ENCODE measurements at regions of chr7 and their contacts with region 1.

Region 1: DNA sequence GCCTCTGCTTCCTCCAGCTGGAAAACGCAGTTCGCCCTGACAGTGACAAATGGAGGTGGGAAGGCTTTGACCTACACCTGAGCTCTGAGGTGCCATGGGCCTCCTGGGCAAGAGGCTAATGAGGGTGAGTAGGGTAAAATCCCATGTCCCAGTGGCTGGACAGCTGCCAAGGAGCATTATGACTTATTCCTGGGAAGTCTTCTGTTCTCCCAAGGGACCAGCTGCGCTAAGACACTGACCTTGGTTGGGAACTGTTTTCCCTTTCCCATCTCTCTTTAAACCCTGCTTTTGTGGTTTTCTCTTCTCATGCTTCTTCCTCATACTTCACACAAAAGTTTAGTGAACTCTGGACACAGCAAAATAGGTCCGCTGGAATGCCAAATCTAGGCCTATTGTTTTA is 72.6 kb downstream of the COPG2 start:
- DNase-seq: no peak
- ATAC-seq: no peak
- H3K4me3 ChIP-seq: no peak overlapping the region
- H3K27ac ChIP-seq: no peak overlapping the region
- H3K4me1 ChIP-seq: no peaks in the 10 kb centered on the region
- H3K27me3 ChIP-seq: no peaks in the 10 kb centered on the region
- CTCF ChIP-seq: no peak
- EP300 ChIP-seq: no peak
- POLR2A ChIP-seq: no peak
- RAD21 ChIP-seq: no peak

Region 2: GRCh38 chr7:130352221-130353075 is 243.5 kb before region 1 on chr7:
- CTCF ChIA-PET with region 1: no interaction called
- POLR2A ChIA-PET with region 1: no interaction called
- in situ Hi-C with region 1: no loop called
- intact Hi-C with region 1: no loop called
- DNase-seq: no peak
- ATAC-seq: no peak
- H3K4me3 ChIP-seq: no peak overlapping the region
- H3K27ac ChIP-seq: no peak overlapping the region
- H3K4me1 ChIP-seq: peaks cover 0 to 2% of the 10 kb centered on the region in 2 experiments; a peak in 1 of 5 replicates
- H3K27me3 ChIP-seq: peaks cover 38 to 74% of the 10 kb centered on the region in 2 experiments
- CTCF ChIP-seq: no peak
- EP300 ChIP-seq: no peak
- POLR2A ChIP-seq: no peak
- RAD21 ChIP-seq: no peak

Region 3: DNA sequence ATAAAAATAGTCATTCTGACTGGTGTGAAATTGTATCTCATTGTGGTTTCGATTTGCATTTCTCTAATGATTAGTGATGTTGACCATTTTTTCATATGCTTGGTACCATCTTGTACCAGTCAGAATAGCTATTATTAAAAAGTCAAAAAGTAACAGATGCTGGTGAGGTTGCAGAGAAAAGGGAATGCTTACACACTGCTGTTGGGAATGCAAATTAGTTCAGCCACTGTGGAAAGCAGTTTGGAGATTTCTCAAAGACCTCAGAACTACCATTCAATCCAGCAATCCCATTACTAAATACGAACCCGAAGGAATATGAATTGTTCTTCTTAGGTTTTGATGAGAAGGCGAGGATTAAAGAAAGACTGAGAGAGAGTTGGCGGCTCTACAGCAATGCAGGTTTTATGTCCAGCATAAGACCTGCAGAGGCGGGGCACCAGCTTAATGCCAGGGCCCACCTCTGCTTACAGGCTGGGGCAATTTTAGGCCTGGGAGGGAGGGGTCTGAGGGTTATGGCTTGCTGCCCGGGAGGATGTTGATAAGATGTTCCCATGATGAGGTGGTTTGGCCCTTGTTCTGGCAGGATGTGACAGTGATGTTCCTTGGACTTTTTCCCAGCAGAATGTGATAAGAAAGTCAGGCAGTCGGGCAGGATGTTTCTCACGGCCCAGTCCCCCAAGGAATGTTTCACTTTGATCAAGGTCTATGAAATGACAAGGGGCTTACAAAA is 29.7 kb before region 1 on chr7:
- CTCF ChIA-PET with region 1: no interaction called
- POLR2A ChIA-PET with region 1: no interaction called
- in situ Hi-C with region 1: no loop called
- intact Hi-C with region 1: loop called (anchors 1 kb)
- DNase-seq: peak in 2 of 4 experiments; percentile 5 to 13
- ATAC-seq: no peak
- H3K4me3 ChIP-seq: no peak overlapping the region
- H3K27ac ChIP-seq: no peak overlapping the region
- H3K4me1 ChIP-seq: peaks cover 0 to 3% of the 10 kb centered on the region in 2 experiments; a peak in 1 of 5 replicates
- H3K27me3 ChIP-seq: no peaks in the 10 kb centered on the region
- CTCF ChIP-seq: no peak
- EP300 ChIP-seq: no peak
- POLR2A ChIP-seq: no peak
- RAD21 ChIP-seq: no peak

Region 4: GRCh38 chr7:130982160-130982638 is 386.2 kb after region 1 on chr7:
- CTCF ChIA-PET with region 1: no interaction called
- POLR2A ChIA-PET with region 1: no interaction called
- in situ Hi-C with region 1: no loop called
- intact Hi-C with region 1: no loop called
- DNase-seq: peak; percentile 46 to 68 (median 58)
- ATAC-seq: peak; percentile 96
- H3K4me3 ChIP-seq: no peak overlapping the region
- H3K27ac ChIP-seq: no peak overlapping the region
- H3K4me1 ChIP-seq: no peaks in the 10 kb centered on the region; a peak in 1 of 5 replicates
- H3K27me3 ChIP-seq: no peaks in the 10 kb centered on the region
- CTCF ChIP-seq: peak; percentile 74 to 92 (median 84)
- EP300 ChIP-seq: peak; percentile 8; the same call in 1 of the 2 replicates
- POLR2A ChIP-seq: no peak
- RAD21 ChIP-seq: peak; percentile 79 to 89

Measured in K562 (cell line).